B cell (primary cell): ENCODE measurements at regions of chrX and their contacts with region 1.

Region 1: GRCh38 chrX:136866337-136867095 is 14.0 kb downstream of the RBMX start:
- DNase-seq: no peak
- ATAC-seq: no peak
- H3K4me3 ChIP-seq: no peak overlapping the region
- H3K4me3 Mint-ChIP-seq: no peak overlapping the region
- H3K27ac ChIP-seq: no peak overlapping the region
- H3K27ac Mint-ChIP-seq: peak overlapping the region; percentile 46
- H3K4me1 ChIP-seq: peaks cover 0 to 2% of the 10 kb centered on the region in 2 donors
- H3K4me1 Mint-ChIP-seq: peaks cover 29% of the 10 kb centered on the region
- H3K27me3 ChIP-seq: no peaks in the 10 kb centered on the region
- H3K27me3 Mint-ChIP-seq: no peaks in the 10 kb centered on the region
- CTCF ChIP-seq: no peak

Region 2: DNA sequence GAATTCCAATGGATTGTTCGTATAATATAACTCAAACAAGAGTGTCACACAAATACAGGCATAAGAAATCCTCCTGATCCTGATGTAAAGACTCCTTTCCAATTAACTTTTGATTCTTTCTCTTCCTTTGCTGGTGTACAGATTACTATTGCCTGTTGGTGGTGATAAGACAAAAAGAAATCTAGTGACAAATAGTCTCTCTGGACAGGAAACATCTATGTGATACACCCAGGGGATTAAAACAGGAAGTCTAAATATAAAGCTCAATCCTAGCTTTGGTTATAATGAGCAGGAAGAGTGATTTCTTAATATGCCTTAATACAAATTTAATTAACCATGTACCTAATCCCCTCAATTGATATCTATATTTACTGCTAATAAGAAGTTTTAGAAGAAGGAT is 130.9 kb before region 1 on chrX:
- CTCF ChIA-PET with region 1: no interaction called
- POLR2A ChIA-PET with region 1: no interaction called
- intact Hi-C with region 1: no loop called
- DNase-seq: no peak
- ATAC-seq: peak; percentile 47
- H3K4me3 ChIP-seq: peak overlapping the region in 1 of 5 experiments; percentile 30
- H3K4me3 Mint-ChIP-seq: peak overlapping the region; percentile 24
- H3K27ac ChIP-seq: no peak overlapping the region
- H3K27ac Mint-ChIP-seq: peak overlapping the region; percentile 51
- H3K4me1 ChIP-seq: peaks cover 10 to 12% of the 10 kb centered on the region in 2 donors
- H3K4me1 Mint-ChIP-seq: peaks cover 20% of the 10 kb centered on the region
- H3K27me3 ChIP-seq: no peaks in the 10 kb centered on the region
- H3K27me3 Mint-ChIP-seq: no peaks in the 10 kb centered on the region
- CTCF ChIP-seq: no peak

Region 3: GRCh38 chrX:136747003-136747986 is 119.2 kb before region 1 on chrX:
- CTCF ChIA-PET with region 1: no interaction called
- POLR2A ChIA-PET with region 1: no interaction called
- intact Hi-C with region 1: no loop called
- DNase-seq: peak; percentile 47
- ATAC-seq: peak; percentile 74
- H3K4me3 ChIP-seq: no peak overlapping the region
- H3K4me3 Mint-ChIP-seq: peak overlapping the region; percentile 72
- H3K27ac ChIP-seq: peak overlapping the region; percentile 69 to 84
- H3K27ac Mint-ChIP-seq: peak overlapping the region; percentile 97
- H3K4me1 ChIP-seq: peaks cover 60 to 76% of the 10 kb centered on the region in 2 donors
- H3K4me1 Mint-ChIP-seq: peaks cover 75% of the 10 kb centered on the region
- H3K27me3 ChIP-seq: no peaks in the 10 kb centered on the region
- H3K27me3 Mint-ChIP-seq: no peaks in the 10 kb centered on the region
- CTCF ChIP-seq: no peak

Region 4: DNA sequence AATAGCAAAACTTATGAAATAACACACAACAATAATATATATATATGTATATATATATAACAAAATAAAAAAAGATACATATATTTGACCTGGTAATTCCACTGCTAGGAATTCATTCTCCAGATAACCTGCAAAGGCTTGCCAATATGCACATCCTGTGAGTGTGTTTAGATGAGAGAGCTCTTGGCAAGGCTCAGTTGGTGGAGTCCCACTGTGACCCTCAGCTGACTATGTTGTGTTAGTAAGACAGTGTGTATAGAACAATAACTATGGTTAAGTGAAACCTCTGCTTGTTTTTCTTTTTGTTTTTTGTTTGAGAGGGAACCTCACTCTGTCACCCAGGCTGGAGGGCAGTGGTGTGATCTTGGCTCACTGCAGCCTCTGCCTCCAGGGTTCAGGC is 53.5 kb after region 1 on chrX:
- CTCF ChIA-PET with region 1: no interaction called
- POLR2A ChIA-PET with region 1: no interaction called
- intact Hi-C with region 1: loop called (anchors 5 kb)
- DNase-seq: no peak
- ATAC-seq: no peak
- H3K4me3 ChIP-seq: no peak overlapping the region
- H3K4me3 Mint-ChIP-seq: no peak overlapping the region
- H3K27ac ChIP-seq: no peak overlapping the region
- H3K27ac Mint-ChIP-seq: no peak overlapping the region
- H3K4me1 ChIP-seq: no peaks in the 10 kb centered on the region
- H3K4me1 Mint-ChIP-seq: peaks cover 1% of the 10 kb centered on the region
- H3K27me3 ChIP-seq: no peaks in the 10 kb centered on the region
- H3K27me3 Mint-ChIP-seq: no peaks in the 10 kb centered on the region
- CTCF ChIP-seq: no peak